ENCODE measurements at regions of chr4 and their contacts with region 1.

Region 1: GRCh38 chr4:159175085-159175988 is 72.5 kb downstream of the RAPGEF2 start:
- DNase-seq: peak; percentile 46
- ATAC-seq: peak; percentile 90

Region 2: GRCh38 chr4:158722917-158723793 is 452.2 kb before region 1 on chr4 and contains the start of gene PPID:
- intact Hi-C with region 1: loop called (anchors 10 kb)
- DNase-seq: peak; percentile 91
- ATAC-seq: peak; percentile 99
- total RNA-seq, gene PPID: 36.3 TPM

Region 3: DNA sequence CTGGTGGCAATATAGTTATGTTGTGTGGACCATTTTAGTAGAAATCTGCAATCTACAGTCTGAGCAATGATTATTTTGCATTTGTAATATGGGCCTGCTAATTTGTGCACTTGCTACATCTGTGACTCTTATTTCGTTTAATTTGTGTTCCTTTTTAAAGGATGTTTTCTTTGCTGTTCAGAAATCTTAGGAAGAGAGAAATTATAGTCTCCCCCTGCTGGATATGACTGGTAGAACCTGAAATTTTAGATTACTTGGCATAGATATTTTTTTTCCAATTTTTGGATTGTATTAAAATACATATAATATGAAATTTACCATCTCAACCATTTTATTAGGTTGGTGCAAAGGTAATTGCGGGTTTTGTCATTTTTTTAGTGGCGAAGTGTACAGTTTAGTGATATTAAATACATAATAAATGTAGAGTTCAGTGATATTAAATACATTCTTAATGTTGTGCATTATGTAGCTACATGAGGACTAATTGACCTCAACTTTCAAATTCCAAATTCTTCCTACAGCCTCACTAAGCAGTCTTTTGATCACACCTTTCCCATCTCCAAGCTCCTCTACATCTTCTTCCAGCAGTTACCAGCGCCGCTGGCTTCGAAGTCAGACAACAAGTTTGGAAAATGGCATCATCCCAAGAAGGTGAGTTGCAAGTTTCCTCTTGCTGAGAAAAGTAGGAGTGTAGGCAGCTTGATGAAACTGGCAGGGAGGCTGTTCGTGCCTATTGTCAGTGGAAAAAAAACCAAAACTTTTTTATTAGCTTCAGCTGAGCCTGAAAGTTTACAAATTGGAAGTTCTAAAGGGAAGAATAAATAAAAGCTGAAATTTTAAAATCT is 324.3 kb before region 1 on chr4:
- intact Hi-C with region 1: loop called (anchors 5 kb)
- DNase-seq: no peak
- ATAC-seq: peak; percentile 28

Region 4: DNA sequence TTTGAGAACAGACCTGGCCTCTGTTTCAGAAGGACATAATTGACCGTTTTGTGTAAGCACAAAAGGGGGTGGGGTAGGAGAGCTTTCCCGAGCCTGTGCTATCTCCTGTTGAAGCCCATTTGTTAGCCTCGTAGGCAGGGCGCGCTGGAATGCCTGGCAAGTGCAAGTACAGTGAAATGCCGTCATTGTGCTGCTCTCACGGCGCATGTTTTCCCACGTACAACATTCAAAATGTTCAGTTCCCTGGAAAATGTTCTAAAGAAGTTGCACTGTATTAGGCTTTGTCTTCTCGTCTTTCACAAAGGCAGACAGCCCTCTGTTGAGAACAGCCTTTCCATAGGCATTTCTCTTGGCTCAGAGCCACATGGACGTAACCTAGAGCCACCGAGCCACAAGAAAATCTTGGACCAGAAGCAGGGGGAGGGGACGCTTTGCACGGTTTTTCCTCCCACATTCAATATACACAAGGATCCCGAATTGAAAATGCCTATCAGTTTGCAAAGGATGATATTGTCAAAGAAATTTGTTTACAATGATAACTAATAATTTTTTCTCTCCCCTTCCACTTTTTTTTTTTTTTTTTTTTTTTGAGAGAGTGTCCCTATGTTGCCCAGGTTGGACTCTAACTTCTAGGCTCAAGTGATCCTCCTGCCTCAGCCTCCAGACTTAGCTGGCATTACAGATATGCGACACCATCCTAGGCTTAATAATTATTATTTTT is 127.0 kb before region 1 on chr4:
- intact Hi-C with region 1: no loop called
- DNase-seq: peak; percentile 83
- ATAC-seq: peak; percentile 97

Region 5: DNA sequence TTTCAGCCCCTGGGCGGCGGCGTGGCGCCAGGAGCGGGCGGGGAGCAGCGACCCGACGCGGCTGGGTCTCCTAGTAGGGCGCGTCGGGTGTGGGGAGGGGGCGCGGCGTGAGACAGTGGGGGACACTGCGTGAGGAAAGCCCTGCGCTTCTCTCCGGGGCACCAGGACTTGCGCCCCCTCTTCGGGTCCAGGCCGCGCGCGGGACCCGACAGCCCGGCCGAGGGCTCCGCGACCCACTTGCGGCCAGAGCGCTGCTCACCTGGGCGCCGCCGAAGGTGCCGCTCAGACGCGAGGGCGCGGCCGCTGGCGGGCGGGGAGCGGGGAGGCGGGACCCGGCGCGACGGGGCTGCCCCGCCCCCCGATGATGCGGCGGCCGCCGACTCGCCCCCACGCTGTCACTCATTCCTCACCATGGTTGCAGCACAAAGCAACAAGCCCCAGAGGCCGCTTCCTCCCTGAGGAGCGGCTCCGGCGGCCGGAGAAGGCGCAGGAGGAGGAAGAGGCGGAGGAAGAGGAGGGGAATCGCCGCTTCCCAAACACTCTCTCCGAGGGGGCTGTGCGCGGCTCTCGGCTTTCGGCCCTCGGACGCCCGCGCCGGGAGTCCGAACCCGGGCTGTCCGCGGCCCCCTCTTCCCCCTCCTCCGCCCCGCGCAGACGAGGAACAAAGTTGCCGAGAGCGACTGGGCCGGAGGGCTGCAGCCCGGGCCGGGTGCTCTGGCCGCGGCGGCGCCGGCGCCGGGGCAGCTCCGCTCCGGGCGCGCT is 72.5 kb before region 1 on chr4 and contains the start of gene RAPGEF2:
- intact Hi-C with region 1: loop called (anchors 5 kb)
- DNase-seq: peak; percentile 94
- ATAC-seq: peak; percentile 95
- total RNA-seq, gene RAPGEF2: 43.8 TPM

Measured in Right ventricle myocardium superior (tissue), 1 donor.